Activated CD4-positive, alpha-beta T cell treated with anti-CD3 and anti-CD28 coated beads for 36 hours (primary cell): ENCODE measurements at regions of chr11 and their contacts with region 1.

Region 1: DNA sequence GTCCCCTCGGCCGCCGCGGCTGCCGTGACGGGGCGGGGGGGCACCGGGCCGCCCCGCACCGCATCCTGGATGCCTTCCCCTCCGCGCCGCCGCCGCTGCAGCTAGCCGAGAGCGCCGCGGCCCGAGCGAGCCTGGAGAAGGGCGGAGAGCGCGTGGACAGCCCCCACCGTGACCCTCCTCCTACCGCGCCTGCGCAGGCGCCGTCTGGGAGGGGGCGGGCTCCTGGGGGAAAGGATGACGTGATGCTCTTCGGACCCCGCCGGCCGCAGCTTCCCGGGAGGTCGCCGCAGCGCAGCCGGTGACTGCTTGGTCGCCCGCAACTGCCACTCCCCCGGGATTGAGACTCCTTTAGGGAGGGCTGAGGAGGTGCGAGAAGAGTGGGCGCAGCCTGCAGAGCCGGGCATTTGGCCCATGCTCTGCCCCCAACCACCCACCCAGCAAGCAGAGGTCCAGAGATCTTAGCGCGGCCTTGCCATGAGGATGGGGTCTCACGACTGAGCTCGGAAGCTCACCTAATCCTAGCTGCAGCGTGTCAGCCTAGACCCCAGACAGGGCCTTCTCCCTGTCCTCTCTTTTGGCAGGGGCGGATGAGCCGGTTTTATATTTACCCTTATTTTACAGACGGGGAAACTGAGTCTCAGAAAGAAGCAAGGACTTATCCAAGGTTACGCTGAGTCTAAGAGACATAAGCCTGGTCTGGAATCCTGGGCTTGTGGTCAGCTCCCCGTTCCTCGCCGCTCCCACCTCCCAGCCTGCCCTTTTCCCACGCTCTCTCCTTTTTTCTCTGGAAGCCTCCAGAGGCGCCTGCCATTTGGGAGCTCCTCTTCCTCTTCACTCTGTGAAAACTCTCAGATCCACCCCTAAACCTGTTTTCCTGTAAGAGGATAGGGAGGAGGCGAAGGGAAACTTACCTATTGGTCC is at the start of gene DENND5A:
- DNase-seq: peak; percentile 71
- ATAC-seq: peak; percentile 37
- H3K4me3 Mint-ChIP-seq: peak within 1 kb of the TSS; percentile 87
- H3K27ac Mint-ChIP-seq: peak within 1 kb of the TSS; percentile 93
- H3K4me1 Mint-ChIP-seq: peaks cover 33% of the 10 kb centered on the region
- H3K27me3 Mint-ChIP-seq: peaks cover 6% of the 10 kb centered on the region
- total RNA-seq, gene DENND5A: 43.6 to 62.6 TPM

Region 2: GRCh38 chr11:9060700-9061111 is 204.8 kb before region 1 on chr11:
- CTCF ChIA-PET with region 1: no interaction called
- POLR2A ChIA-PET with region 1: no interaction called
- intact Hi-C with region 1: loop called in 1 of 2 experiments (anchors 1 kb)
- DNase-seq: peak; percentile 88
- ATAC-seq: peak; percentile 100
- H3K4me3 Mint-ChIP-seq: no peak overlapping the region
- H3K27ac Mint-ChIP-seq: peak overlapping the region; percentile 29
- H3K4me1 Mint-ChIP-seq: peaks cover 13% of the 10 kb centered on the region
- H3K27me3 Mint-ChIP-seq: peaks cover 25% of the 10 kb centered on the region

Region 3: GRCh38 chr11:9210922-9211320 is 54.5 kb before region 1 on chr11:
- CTCF ChIA-PET with region 1: interaction called, 5 read pairs
- POLR2A ChIA-PET with region 1: interaction called, 5 read pairs
- intact Hi-C with region 1: loop called (anchors 1 to 2 kb)
- DNase-seq: peak; percentile 41
- ATAC-seq: peak; percentile 39
- H3K4me3 Mint-ChIP-seq: no peak overlapping the region
- H3K27ac Mint-ChIP-seq: peak overlapping the region; percentile 76
- H3K4me1 Mint-ChIP-seq: peaks cover 68% of the 10 kb centered on the region
- H3K27me3 Mint-ChIP-seq: no peaks in the 10 kb centered on the region

Region 4: GRCh38 chr11:9250139-9250582 is 15.3 kb before region 1 on chr11:
- CTCF ChIA-PET with region 1: interaction called, 6 read pairs
- POLR2A ChIA-PET with region 1: interaction called, 7 read pairs
- intact Hi-C with region 1: loop called (anchors 1 to 2 kb)
- DNase-seq: peak; percentile 50
- ATAC-seq: peak; percentile 72
- H3K4me3 Mint-ChIP-seq: peak overlapping the region; percentile 18
- H3K27ac Mint-ChIP-seq: peak overlapping the region; percentile 42
- H3K4me1 Mint-ChIP-seq: peaks cover 69% of the 10 kb centered on the region
- H3K27me3 Mint-ChIP-seq: no peaks in the 10 kb centered on the region

Region 5: DNA sequence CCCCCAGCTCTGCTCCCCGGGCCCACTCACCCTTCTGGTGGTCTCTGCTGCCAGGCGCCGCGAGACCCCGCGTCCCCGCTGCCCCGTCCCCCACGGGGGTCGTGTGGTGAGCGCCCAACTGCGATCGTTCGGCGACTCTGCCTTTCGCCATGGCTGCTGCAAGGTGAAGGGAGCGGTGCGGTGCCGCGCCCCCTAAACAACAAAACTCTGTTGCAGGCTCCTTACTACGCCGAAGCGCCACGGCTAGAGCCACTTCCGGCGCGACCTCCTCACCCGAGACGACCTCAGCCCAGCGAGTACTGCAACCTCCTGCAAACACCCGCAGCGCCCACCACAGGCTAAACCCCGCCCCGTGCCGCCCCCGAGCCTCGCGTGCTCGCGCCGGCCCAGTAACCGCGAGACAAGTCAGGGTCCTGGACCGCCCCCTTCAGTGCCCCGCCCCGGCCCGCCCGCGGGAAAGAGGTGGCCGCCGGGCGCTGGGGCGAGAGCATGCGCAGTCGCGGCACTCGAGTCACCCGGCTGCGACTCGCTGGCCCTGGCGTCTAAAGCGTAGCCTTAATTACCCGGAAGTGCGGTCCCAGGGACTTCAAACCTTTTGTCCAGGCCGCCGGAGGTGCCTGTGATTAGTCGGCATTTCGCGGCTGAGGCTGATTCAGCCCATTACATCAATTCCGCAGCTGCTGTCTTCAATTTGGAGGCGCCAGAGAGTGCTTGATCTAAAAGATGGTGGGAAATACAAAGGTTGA is 49.0 kb after region 1 on chr11 and contains the start of gene TMEM41B:
- CTCF ChIA-PET with region 1: interaction called, 3 read pairs
- POLR2A ChIA-PET with region 1: interaction called, 6 read pairs
- intact Hi-C with region 1: loop called (anchors 1 kb)
- DNase-seq: peak; percentile 100
- ATAC-seq: peak; percentile 95
- H3K4me3 Mint-ChIP-seq: peak within 1 kb of the TSS; percentile 99
- H3K27ac Mint-ChIP-seq: peak within 1 kb of the TSS; percentile 99
- H3K4me1 Mint-ChIP-seq: peaks cover 36% of the 10 kb centered on the region
- H3K27me3 Mint-ChIP-seq: peaks cover 11% of the 10 kb centered on the region
- total RNA-seq, gene TMEM41B: 20.2 to 29.3 TPM

Region 6: DNA sequence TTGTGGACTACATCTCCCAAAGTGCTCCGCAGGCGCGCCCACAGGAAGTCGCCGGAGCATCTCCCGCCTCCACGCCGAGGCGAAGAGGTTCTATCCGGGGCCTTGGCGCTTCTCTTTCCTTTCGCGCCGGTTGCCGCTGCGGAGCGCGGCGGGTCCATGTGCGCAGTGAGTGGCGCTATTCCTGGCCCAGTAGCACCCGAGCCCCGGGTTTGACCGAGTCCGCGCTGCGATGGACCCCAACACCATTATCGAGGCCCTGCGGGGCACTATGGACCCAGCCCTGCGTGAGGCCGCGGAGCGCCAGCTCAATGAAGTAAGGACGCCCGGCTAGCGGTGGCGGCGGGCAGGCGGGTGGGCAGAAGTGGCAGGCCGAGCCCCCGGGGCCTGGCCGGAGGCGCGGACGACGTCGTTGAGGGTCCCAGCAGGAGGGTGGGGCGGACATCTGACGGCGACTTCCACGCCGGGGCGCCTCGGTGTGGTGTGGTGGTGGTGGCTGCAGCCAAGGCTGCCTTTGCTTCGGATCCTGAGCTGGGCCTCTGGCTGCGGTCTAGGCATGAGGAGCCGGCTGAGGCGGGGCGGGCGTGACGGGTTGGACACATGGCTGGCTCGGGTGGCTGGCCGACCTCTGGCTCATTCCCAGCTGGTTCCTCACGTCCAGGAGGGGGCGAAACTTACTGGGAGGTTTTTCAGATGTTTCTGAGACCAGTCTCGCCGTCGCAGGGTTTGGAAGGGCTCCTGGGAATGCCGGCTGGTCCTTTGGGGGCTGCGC is 119.2 kb after region 1 on chr11 and contains the start of gene IPO7:
- CTCF ChIA-PET with region 1: no interaction called
- POLR2A ChIA-PET with region 1: interaction called, 3 read pairs
- intact Hi-C with region 1: loop called (anchors 1 to 2 kb)
- DNase-seq: peak; percentile 96
- ATAC-seq: peak; percentile 98
- H3K4me3 Mint-ChIP-seq: peak within 1 kb of the TSS; percentile 96
- H3K27ac Mint-ChIP-seq: peak within 1 kb of the TSS; percentile 96
- H3K4me1 Mint-ChIP-seq: peaks cover 26% of the 10 kb centered on the region
- H3K27me3 Mint-ChIP-seq: no peaks in the 10 kb centered on the region
- total RNA-seq, gene IPO7: 155 to 181 TPM

Region 7: GRCh38 chr11:9613118-9613829 is 347.8 kb after region 1 on chr11:
- CTCF ChIA-PET with region 1: interaction called, 3 read pairs
- POLR2A ChIA-PET with region 1: no interaction called
- intact Hi-C with region 1: loop called in 1 of 2 experiments (anchors 1 kb)
- DNase-seq: peak; percentile 94
- ATAC-seq: peak; percentile 64
- H3K4me3 Mint-ChIP-seq: peak overlapping the region; percentile 76
- H3K27ac Mint-ChIP-seq: peak overlapping the region; percentile 98
- H3K4me1 Mint-ChIP-seq: peaks cover 46% of the 10 kb centered on the region
- H3K27me3 Mint-ChIP-seq: no peaks in the 10 kb centered on the region